Tibial artery (tissue), 4 donors: ENCODE measurements at regions of chr9 and their contacts with region 1.

Region 1: GRCh38 chr9:113682297-113682771 is 193.8 kb upstream of the ZNF618 start:
- DNase-seq: peak; percentile 66 to 83
- H3K4me3 ChIP-seq: no peak overlapping the region
- H3K27ac ChIP-seq: no peak overlapping the region
- H3K4me1 ChIP-seq: peaks cover 0 to 3% (median under 1%) of the 10 kb centered on the region in 4 donors
- H3K27me3 ChIP-seq: peaks cover 0 to 9% of the 10 kb centered on the region in 2 donors
- CTCF ChIP-seq: peak; percentile 80 to 88

Region 2: GRCh38 chr9:114033397-114034103 is 351.2 kb after region 1 on chr9:
- intact Hi-C with region 1: loop called (anchors 5 kb)
- DNase-seq: peak in 1 of 2 donors; percentile 65
- H3K4me3 ChIP-seq: no peak overlapping the region
- H3K27ac ChIP-seq: no peak overlapping the region
- H3K4me1 ChIP-seq: peaks cover 0 to 22% (median 4%) of the 10 kb centered on the region in 4 donors
- H3K27me3 ChIP-seq: no peaks in the 10 kb centered on the region
- CTCF ChIP-seq: peak; percentile 52 to 58